A673 (cell line): ENCODE measurements at regions of chr7 and their contacts with region 1.

Region 1: DNA sequence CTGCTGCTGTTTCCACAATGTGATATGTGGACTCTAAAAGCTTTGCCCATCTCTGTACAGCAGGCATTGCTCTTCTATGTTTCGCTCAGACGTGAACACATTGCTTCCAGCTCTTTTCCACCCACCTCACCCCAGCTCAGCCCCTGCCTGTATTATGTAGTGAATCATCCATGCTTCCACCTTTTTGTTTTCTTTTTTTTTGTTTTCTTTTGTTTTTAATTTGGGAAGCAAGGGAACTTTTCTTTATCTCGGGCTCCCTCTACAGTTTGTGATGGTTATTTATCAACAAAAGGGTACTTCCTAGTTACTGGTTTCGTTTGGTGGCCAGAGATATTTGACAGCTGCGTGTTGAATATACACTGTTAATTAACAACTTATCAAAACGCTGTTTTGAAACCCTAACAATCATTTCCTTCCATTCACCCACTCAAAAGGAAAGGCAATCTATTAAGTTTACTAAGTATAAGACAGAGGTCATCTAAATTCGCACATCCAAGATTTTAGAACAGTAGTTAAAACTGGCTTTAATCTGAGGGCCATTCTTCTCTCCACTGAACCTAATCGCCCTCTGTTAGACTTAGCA is 127.9 kb upstream of the STK17A start:
- DNase-seq: peak; percentile 62
- H3K4me3 ChIP-seq: no peak overlapping the region
- H3K27ac ChIP-seq: no peak overlapping the region
- H3K4me1 ChIP-seq: no peaks in the 10 kb centered on the region
- H3K27me3 ChIP-seq: no peaks in the 10 kb centered on the region
- CTCF ChIP-seq: peak; percentile 73

Region 2: GRCh38 chr7:43700059-43700501 is 245.1 kb after region 1 on chr7:
- CTCF ChIA-PET with region 1: interaction called, 9 read pairs
- POLR2A ChIA-PET with region 1: no interaction called
- intact Hi-C with region 1: loop called (anchors 2 kb)
- DNase-seq: peak; percentile 78
- H3K4me3 ChIP-seq: no peak overlapping the region
- H3K27ac ChIP-seq: no peak overlapping the region
- H3K4me1 ChIP-seq: peaks cover 25% of the 10 kb centered on the region
- H3K27me3 ChIP-seq: no peaks in the 10 kb centered on the region
- CTCF ChIP-seq: peak; percentile 74

Region 3: GRCh38 chr7:43721193-43721806 is 266.3 kb after region 1 on chr7:
- CTCF ChIA-PET with region 1: interaction called, 8 read pairs
- POLR2A ChIA-PET with region 1: no interaction called
- intact Hi-C with region 1: loop called (anchors 5 kb)
- DNase-seq: peak; percentile 68
- H3K4me3 ChIP-seq: no peak overlapping the region
- H3K27ac ChIP-seq: no peak overlapping the region
- H3K4me1 ChIP-seq: peaks cover 7% of the 10 kb centered on the region
- H3K27me3 ChIP-seq: no peaks in the 10 kb centered on the region
- CTCF ChIP-seq: peak; percentile 78

Region 4: GRCh38 chr7:43834463-43835251 is 379.6 kb after region 1 on chr7:
- CTCF ChIA-PET with region 1: no interaction called
- POLR2A ChIA-PET with region 1: no interaction called
- intact Hi-C with region 1: loop called (anchors 5 kb)
- DNase-seq: peak; percentile 19
- H3K4me3 ChIP-seq: peak overlapping the region; percentile 30
- H3K27ac ChIP-seq: no peak overlapping the region
- H3K4me1 ChIP-seq: no peaks in the 10 kb centered on the region
- H3K27me3 ChIP-seq: no peaks in the 10 kb centered on the region
- CTCF ChIP-seq: no peak